ENCODE measurements at regions of chr1 and their contacts with region 1.

Region 1: DNA sequence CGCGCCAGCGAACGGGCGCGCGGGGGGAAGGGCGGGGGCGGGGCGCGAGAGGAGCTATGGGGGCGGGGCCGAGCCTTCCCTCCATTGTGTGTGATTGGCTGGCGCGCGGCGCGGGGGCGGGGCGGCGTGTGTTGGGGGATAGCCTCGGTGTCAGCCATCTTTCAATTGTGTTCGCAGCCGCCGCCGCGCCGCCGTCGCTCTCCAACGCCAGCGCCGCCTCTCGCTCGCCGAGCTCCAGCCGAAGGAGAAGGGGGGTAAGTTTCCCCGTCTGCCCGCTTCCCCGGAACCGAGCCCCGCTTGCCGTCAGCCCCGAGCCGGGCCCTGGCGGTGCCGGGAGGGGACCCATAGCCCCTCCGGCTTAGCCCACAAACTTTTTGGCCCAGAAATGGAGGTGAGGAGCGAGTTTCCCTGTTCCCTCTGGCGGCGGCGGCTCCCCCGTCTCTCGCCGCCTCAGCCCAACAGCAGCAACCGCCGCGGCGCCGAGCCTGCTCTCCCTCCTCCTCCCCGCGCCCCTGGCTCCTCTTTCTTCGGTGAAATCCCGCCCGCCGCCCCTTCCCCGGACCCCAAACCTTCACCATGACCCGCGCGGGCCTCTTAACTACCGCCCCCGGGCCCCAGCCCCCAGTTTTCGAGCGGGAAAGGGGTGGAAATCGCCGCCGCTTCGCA is at the start of gene H3-3A:
- DNase-seq: peak; percentile 98
- H3K4me3 Mint-ChIP-seq: peak within 1 kb of the TSS; percentile 99
- H3K27ac Mint-ChIP-seq: peak within 1 kb of the TSS; percentile 100
- H3K4me1 Mint-ChIP-seq: peaks cover 41% of the 10 kb centered on the region
- H3K27me3 Mint-ChIP-seq: no peaks in the 10 kb centered on the region
- total RNA-seq, gene H3-3A: 480 to 486 TPM

Region 2: DNA sequence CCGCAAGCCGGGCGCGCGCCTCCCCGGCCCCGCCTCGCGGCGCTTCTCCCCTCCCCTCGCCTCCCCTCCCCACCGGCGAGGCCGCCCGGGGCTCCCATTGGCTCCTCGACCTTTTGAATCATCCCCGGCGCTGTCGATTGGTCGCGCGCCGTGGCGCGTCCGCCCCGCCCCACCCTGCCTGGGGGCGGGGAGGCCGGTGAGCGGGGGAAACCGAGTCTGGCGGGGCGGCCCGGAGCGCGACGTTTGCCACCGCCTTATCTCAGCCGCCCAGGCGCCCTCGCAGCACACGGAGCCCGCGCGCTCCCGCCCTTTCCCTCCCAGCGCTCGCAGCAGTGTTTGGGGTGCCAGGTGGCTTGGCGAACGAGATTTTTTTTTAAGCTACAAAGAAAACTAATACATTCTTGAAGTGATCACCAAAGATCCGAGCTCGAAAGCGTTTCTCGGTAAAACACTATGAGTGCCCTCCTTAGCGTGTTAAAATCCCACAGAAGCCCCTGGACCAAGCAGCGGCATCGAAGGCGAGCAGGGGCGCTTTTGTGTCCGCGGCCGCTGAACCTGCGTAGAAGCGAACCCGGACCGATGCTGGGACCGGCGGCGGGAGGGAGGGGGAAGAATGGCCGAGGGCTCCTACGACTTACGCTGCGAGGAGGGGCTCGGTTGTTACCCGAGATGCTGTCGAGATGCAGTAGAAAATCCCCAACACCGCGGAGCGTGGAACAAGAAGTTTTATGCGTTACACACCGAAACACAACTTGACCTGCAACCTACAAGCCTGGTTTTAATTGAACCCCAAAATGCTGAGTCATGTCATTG is 634.4 kb before region 1 on chr1:
- CTCF ChIA-PET with region 1: interaction called, 3 read pairs
- POLR2A ChIA-PET with region 1: interaction called, 21 read pairs
- DNase-seq: peak; percentile 95
- H3K4me3 Mint-ChIP-seq: peak overlapping the region; percentile 89
- H3K27ac Mint-ChIP-seq: peak overlapping the region; percentile 89
- H3K4me1 Mint-ChIP-seq: peaks cover 54% of the 10 kb centered on the region
- H3K27me3 Mint-ChIP-seq: peaks cover 2% of the 10 kb centered on the region

Region 3: DNA sequence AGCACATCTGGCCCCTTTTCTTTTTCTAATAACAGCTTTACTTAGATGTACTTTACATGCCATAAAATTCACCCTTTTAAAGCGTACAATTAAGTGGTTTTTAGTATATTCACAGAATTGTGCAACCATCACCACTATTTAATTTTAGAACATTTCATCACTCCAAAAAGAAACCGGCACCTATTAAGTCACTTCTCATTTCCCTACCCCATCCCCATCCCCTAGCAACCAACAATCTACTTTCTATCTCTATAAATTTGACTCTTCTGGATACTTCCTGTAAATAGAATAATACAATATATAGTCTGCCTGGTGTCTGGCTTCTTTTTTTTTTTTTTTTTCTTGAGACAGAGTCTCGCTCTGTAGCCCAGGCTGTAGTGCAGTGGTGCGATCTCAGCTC is 350.3 kb before region 1 on chr1:
- CTCF ChIA-PET with region 1: no interaction called
- POLR2A ChIA-PET with region 1: no interaction called
- DNase-seq: no peak
- H3K4me3 Mint-ChIP-seq: no peak overlapping the region
- H3K27ac Mint-ChIP-seq: no peak overlapping the region
- H3K4me1 Mint-ChIP-seq: no peaks in the 10 kb centered on the region
- H3K27me3 Mint-ChIP-seq: no peaks in the 10 kb centered on the region

Region 4: DNA sequence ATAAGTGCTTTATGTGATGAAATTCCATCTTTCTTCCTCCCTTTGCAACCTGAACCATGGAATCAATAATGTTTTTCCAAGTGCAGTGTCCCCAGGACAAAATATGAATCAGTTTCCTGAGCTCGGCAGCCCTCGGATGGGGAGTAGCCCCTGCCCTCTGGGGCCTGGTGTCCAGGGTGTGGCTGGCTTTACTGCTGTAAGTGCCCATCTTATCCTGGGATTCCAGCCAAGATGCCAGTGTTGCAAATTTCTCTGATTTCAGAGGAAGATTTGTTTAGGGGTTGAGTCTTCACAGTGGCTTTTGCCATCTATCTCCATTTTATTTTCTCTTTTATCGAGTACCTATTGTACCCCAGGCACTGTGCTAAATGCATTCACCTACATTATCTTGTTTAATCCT is 325.5 kb before region 1 on chr1:
- CTCF ChIA-PET with region 1: no interaction called
- POLR2A ChIA-PET with region 1: no interaction called
- DNase-seq: no peak
- H3K4me3 Mint-ChIP-seq: no peak overlapping the region
- H3K27ac Mint-ChIP-seq: no peak overlapping the region
- H3K4me1 Mint-ChIP-seq: no peaks in the 10 kb centered on the region
- H3K27me3 Mint-ChIP-seq: no peaks in the 10 kb centered on the region

Region 5: GRCh38 chr1:225777583-225778336 is 284.9 kb before region 1 on chr1 and contains the start of gene SRP9:
- CTCF ChIA-PET with region 1: interaction called, 5 read pairs
- POLR2A ChIA-PET with region 1: interaction called, 27 read pairs
- DNase-seq: peak; percentile 99
- H3K4me3 Mint-ChIP-seq: no peak within 1 kb of the TSS
- H3K27ac Mint-ChIP-seq: no peak within 1 kb of the TSS
- H3K4me1 Mint-ChIP-seq: peaks cover 29% of the 10 kb centered on the region
- H3K27me3 Mint-ChIP-seq: no peaks in the 10 kb centered on the region
- total RNA-seq, gene SRP9: 246 to 253 TPM

Region 6: DNA sequence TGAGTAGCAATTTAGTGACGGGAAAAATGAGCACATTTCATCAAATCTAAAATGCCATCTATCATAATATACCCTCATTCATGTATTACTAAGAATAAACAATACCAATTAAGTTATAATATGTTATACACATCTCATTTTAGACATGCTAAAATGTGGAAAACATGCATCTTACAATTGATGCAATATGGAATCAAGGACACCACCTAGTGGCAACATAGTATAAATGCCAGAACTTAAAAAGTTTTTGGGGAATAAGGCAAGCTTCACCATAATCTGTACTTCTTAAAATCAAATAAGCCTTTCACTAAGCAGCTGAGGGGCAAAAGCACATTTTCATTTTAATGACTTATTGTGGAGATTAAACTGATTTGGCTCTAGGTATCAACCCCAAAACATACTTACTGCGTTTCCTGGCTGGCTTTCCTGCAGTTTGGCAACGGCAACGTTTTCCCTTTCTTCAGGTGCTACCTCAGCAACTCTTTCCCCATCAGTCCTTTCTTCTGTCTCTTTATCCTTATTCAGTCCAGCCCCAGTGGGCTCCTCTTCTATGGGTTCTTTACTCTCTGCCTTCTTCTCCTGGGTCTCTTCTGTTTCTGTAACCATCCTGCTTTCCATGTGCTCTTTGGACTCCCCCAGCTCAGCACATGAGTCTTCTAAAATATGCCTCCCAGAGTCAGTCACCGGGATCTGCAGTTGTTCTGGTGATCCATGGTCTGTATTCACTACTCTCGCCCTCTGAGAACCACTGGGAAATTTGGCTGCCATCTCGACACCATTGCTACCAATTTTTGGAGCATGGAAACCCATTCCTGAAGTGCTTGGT is 75.0 kb before region 1 on chr1:
- CTCF ChIA-PET with region 1: interaction called, 12 read pairs
- POLR2A ChIA-PET with region 1: interaction called, 13 read pairs
- DNase-seq: no peak
- H3K4me3 Mint-ChIP-seq: no peak overlapping the region
- H3K27ac Mint-ChIP-seq: peak overlapping the region; percentile 4
- H3K4me1 Mint-ChIP-seq: peaks cover 35% of the 10 kb centered on the region
- H3K27me3 Mint-ChIP-seq: no peaks in the 10 kb centered on the region

Region 7: GRCh38 chr1:226074046-226074445 is 11.4 kb after region 1 on chr1:
- CTCF ChIA-PET with region 1: interaction called, 24 read pairs
- POLR2A ChIA-PET with region 1: interaction called, 7 read pairs
- DNase-seq: no peak
- H3K4me3 Mint-ChIP-seq: no peak overlapping the region
- H3K27ac Mint-ChIP-seq: no peak overlapping the region
- H3K4me1 Mint-ChIP-seq: peaks cover 8% of the 10 kb centered on the region
- H3K27me3 Mint-ChIP-seq: no peaks in the 10 kb centered on the region

Region 8: DNA sequence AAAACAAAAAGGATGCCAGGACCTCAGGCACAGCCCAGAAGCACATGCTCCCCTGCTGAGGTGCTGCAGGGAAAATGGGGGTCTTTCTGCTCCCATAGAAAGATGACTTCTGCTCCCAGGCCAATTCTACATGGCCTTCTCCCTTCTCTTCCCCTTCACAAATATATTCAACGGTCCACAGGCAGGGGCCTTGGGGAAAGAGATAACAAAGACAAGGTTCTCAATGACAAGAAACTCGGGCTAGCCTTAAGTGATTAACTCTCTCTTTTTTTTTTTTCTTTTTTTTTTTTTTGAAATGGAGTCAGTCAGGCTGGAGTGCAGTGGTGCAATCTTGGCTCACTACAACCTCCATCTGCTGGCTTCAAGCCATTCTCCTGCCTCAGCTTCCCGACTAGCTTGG is 54.0 kb after region 1 on chr1:
- CTCF ChIA-PET with region 1: interaction called, 26 read pairs
- POLR2A ChIA-PET with region 1: interaction called, 45 read pairs
- DNase-seq: no peak
- H3K4me3 Mint-ChIP-seq: no peak overlapping the region
- H3K27ac Mint-ChIP-seq: no peak overlapping the region
- H3K4me1 Mint-ChIP-seq: peaks cover 12% of the 10 kb centered on the region
- H3K27me3 Mint-ChIP-seq: peaks cover 6% of the 10 kb centered on the region

Region 9: GRCh38 chr1:226308723-226309315 is 246.1 kb after region 1 on chr1 and contains the start of gene LIN9:
- CTCF ChIA-PET with region 1: interaction called, 4 read pairs
- POLR2A ChIA-PET with region 1: interaction called, 17 read pairs
- DNase-seq: peak; percentile 94
- H3K4me3 Mint-ChIP-seq: peak within 1 kb of the TSS; percentile 89
- H3K27ac Mint-ChIP-seq: peak within 1 kb of the TSS; percentile 87
- H3K4me1 Mint-ChIP-seq: peaks cover 32% of the 10 kb centered on the region
- H3K27me3 Mint-ChIP-seq: peaks cover 13% of the 10 kb centered on the region
- total RNA-seq, gene LIN9: 10.4 to 11.5 TPM

Measured in activated CD4-positive, alpha-beta memory T cell treated with anti-CD3 and anti-CD28 coated beads, Interleukin-2, amount 10 ng/mL, durations not matched to agents 7 days and 5 days (primary cell).